ENCODE measurements at regions of chr2 and their contacts with region 1.

Region 1: GRCh38 chr2:237858294-237859081 is 935 bp upstream of the RAMP1 start:
- DNase-seq: no peak
- ATAC-seq: peak; percentile 81

Region 2: GRCh38 chr2:237904801-237905599 is 46.5 kb after region 1 on chr2:
- intact Hi-C with region 1: loop called (anchors 2 kb)
- DNase-seq: no peak
- ATAC-seq: peak; percentile 90

Region 3: GRCh38 chr2:237966565-237967462 is 108.3 kb after region 1 on chr2 and contains the start of gene UBE2F:
- intact Hi-C with region 1: loop called (anchors 5 kb)
- DNase-seq: peak; percentile 99
- ATAC-seq: peak; percentile 98
- total RNA-seq, gene UBE2F: 73.3 TPM

Region 4: DNA sequence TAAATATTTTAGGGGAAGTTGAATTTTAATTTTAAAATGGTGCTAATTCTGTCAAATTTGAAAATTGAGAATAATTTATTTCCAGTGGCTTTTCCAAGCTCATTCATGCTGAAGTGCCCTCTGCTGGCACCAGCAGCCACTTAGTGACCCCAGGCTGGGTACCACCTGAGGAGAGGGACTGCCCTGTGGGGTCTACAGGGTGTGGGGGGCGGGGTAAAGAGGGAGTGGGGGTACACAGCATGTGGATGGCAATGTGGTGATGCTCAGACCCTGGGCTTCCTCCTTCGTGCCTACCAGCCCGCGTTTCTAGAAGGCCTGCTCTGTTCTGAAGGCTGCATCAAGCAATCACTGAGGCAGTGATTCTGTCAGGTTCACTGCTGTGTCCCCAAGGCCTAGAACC is 157.2 kb after region 1 on chr2:
- intact Hi-C with region 1: loop called (anchors 10 kb)
- DNase-seq: no peak
- ATAC-seq: no peak

Region 5: GRCh38 chr2:238139196-238140039 is 280.9 kb after region 1 on chr2:
- intact Hi-C with region 1: loop called (anchors 2 kb)
- DNase-seq: peak; percentile 53
- ATAC-seq: peak; percentile 63

Region 6: GRCh38 chr2:238239872-238240751 is 381.6 kb after region 1 on chr2 and contains the start of gene HES6:
- intact Hi-C with region 1: loop called (anchors 5 kb)
- DNase-seq: peak; percentile 96
- ATAC-seq: peak; percentile 90
- total RNA-seq, gene HES6: 4.3 TPM

Region 7: DNA sequence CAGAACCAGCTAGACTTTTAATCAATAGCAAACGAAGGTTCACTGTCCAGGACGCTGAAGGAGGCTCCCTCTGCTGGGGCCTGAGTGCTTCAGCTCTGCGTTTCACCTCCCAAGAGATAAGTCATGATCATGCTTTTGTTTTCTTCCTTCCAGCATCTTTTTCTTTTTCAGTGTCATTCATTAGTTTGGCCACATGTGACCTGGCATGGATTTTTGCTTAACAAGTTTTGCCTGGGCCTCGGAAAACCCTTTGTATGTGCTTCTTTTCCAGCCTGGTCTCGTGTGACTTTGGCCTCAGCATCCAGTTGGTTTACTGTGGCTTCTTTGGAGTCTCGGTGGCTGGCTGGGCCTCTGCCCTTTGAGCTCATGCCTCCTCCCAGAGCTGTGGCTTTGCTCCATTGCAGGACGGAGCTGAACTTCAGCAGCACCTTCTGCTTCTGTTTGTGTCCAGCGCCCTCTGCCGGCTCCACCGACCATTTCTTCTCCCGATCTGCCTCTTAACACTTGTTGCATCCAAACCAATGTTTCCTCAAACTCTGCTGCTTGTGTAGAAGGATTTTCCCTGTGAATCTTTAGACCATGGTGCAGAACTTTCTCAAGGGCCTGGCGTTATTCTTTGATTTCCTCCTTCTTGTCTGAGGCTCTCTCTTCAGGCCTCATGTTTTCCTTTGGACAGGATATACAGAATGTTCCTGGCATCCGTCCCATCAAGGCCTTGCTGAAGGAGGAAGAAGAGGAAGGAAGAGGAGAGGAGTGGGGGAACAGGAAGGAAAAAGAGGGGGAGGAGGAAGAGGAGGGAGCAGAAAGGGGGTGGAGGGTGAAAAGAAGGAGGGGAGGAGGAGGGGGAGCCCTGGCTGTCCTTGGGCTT is 404.9 kb after region 1 on chr2:
- intact Hi-C with region 1: loop called (anchors 2 kb)
- DNase-seq: peak; percentile 94
- ATAC-seq: peak; percentile 85